PC-3 (cell line): ENCODE measurements at regions of chr9 and their contacts with region 1.

Region 1: DNA sequence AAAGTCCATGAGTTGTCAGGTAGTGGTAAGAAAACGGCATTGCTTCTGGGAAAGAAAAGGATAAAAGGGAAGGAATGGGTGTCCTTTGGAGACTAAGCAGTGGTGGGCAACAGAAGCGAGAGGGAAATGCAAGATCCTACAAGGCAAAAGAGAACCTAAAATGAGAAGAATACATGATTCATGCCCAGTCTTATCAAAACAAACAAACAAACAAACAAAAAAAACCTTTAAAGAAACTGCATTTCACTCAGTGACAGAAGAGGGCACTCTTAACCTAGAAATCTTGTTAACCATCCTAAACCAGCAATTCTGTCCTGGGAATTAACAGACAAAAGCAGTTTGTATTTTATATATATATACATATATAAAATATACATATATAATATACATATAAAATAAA is 88.5 kb downstream of the SUSD1 start:
- DNase-seq: peak; percentile 51
- ATAC-seq: no peak
- H3K4me3 ChIP-seq: no peak overlapping the region
- H3K27ac ChIP-seq: no peak overlapping the region
- H3K4me1 ChIP-seq: peaks cover 6% of the 10 kb centered on the region; the same call in 1 of the 2 replicates
- H3K27me3 ChIP-seq: no peaks in the 10 kb centered on the region
- CTCF ChIP-seq: peak; percentile 56

Region 2: GRCh38 chr9:112166172-112167140 is 79.8 kb after region 1 on chr9:
- CTCF ChIA-PET with region 1: no interaction called
- POLR2A ChIA-PET with region 1: interaction called, 13 read pairs
- intact Hi-C with region 1: no loop called
- DNase-seq: peak; percentile 85
- ATAC-seq: peak; percentile 91
- H3K4me3 ChIP-seq: no peak overlapping the region
- H3K27ac ChIP-seq: peak overlapping the region; percentile 62
- H3K4me1 ChIP-seq: peaks cover 50% of the 10 kb centered on the region
- H3K27me3 ChIP-seq: no peaks in the 10 kb centered on the region
- CTCF ChIP-seq: peak; percentile 56

Region 3: GRCh38 chr9:112241516-112241915 is 154.9 kb after region 1 on chr9:
- CTCF ChIA-PET with region 1: no interaction called
- POLR2A ChIA-PET with region 1: no interaction called
- intact Hi-C with region 1: no loop called
- DNase-seq: peak; percentile 1
- ATAC-seq: no peak
- H3K4me3 ChIP-seq: no peak overlapping the region
- H3K27ac ChIP-seq: no peak overlapping the region
- H3K4me1 ChIP-seq: peaks cover 15% of the 10 kb centered on the region; the same call in 1 of the 2 replicates
- H3K27me3 ChIP-seq: no peaks in the 10 kb centered on the region
- CTCF ChIP-seq: no peak

Region 4: DNA sequence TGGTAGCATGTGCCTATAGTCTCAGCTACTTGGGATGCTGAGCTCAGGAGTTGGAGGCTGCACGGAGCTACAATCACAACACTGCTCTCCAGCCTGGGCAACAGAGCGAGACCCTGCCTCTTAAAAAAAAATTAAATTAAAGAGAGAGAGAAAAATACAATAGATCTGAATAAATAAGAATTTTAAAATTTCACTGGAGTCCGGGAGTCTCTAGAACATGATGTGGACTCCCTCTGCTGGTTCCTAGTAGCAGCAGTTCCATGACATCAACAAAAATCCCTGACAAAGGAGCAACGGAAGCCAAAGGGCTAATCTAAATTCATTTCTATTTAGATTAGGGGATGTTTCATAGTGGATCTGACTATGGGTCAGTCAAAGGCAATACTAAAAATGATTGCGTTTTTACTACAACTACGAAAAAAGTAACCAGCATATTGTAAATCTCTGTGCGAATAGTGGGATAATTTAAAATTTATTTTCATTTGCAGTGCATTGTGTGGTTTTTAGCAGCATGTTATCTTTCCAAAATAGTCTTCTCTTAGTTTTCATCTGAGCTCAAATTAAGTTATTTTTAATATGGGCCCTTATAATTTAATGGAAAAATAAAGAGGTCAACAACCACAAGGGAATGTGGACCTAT is 624.5 kb after region 1 on chr9:
- CTCF ChIA-PET with region 1: no interaction called
- POLR2A ChIA-PET with region 1: no interaction called
- intact Hi-C with region 1: loop called (anchors 5 kb)
- DNase-seq: peak; percentile 27
- ATAC-seq: no peak
- H3K4me3 ChIP-seq: no peak overlapping the region
- H3K27ac ChIP-seq: no peak overlapping the region
- H3K4me1 ChIP-seq: no peaks in the 10 kb centered on the region
- H3K27me3 ChIP-seq: no peaks in the 10 kb centered on the region
- CTCF ChIP-seq: peak; percentile 51